B cell (primary cell): ENCODE measurements at regions of chr2 and their contacts with region 1.

Region 1: DNA sequence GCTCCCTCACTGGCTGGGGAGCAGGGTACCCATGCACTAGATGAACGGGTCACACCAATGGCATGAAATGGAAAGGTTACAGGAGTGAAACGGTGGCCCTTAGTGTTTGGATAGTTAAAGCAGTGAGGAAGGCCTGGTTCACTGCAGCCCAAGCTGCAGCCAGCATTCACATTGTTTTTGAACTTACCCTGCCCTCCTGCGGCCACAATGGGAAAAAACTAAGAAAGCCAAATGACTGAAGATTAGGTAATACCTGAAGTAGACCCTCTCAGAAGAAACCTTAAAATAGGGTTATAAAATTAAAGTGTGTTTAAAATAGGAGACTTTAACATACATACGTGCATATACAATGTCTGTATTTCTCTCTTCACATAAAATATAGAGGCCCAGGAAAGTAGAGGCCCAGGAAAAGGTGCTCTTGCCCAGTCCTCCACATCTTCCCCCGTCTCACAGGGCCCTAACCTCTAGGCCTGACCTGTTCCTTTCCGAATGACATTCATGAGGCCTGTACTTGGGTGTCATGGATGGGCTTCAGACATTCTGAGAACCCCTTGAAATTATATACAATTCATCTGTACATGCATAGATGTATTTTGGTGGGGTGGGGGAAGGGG is 33.3 kb downstream of the DOK1 start:
- DNase-seq: peak; percentile 83
- ATAC-seq: peak; percentile 92
- H3K4me3 ChIP-seq: no peak overlapping the region
- H3K4me3 Mint-ChIP-seq: no peak overlapping the region
- H3K27ac ChIP-seq: no peak overlapping the region
- H3K27ac Mint-ChIP-seq: no peak overlapping the region
- H3K4me1 ChIP-seq: peaks cover 0 to 6% of the 10 kb centered on the region in 2 donors
- H3K4me1 Mint-ChIP-seq: peaks cover 9% of the 10 kb centered on the region
- H3K27me3 ChIP-seq: peaks cover 0 to 5% (median 5%) of the 10 kb centered on the region in 4 experiments
- H3K27me3 Mint-ChIP-seq: peaks cover 22% of the 10 kb centered on the region
- CTCF ChIP-seq: peak; percentile 80

Region 2: DNA sequence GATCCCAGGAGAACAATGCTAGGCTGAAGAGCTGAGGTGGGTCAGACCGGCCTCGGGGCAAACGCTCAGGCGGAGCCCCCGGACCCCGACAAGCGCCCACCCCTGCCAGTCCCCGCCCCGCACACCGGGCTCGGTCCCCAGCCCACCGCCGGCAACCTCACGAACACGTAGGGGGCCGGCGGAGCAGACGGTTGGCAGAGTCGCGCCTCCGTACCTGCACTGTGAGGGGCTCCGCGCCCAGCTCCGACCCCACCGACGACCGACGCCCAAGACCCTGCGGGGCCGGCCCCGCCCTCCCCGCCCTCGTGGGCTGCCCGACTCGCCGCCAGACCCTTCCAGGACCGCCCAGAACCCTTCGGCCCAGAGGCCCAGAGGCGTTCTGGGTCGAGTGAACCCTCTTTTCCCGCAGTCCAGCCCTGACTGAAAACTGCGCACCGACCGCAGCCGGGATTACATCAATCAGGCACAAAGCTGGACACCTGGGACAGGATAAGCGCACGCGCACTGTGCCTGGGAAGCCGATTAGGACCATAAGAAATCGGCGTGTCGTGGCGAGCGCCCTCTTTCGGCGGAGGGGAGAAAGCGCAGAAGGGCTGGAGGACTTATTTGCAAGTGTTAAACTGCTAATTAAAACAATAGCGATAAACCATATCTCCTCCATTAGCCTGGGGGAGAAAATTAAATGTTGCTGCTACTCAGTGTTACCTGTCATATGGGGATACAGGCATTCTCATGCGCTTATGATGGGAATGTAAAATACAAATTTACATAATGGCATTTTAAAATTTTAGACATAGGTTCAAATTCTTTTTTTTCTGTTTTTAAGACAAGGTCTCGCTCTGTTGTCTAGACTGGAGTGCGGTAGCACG is 196.0 kb before region 1 on chr2:
- CTCF ChIA-PET with region 1: interaction called, 10 read pairs
- POLR2A ChIA-PET with region 1: no interaction called
- intact Hi-C with region 1: loop called (anchors 5 kb)
- DNase-seq: peak; percentile 98
- ATAC-seq: peak; percentile 89
- H3K4me3 ChIP-seq: peak overlapping the region; percentile 71 to 88 (median 80)
- H3K4me3 Mint-ChIP-seq: peak overlapping the region; percentile 99
- H3K27ac ChIP-seq: peak overlapping the region; percentile 94 to 95
- H3K27ac Mint-ChIP-seq: peak overlapping the region; percentile 100
- H3K4me1 ChIP-seq: peaks cover 18 to 24% of the 10 kb centered on the region in 2 donors
- H3K4me1 Mint-ChIP-seq: peaks cover 16% of the 10 kb centered on the region
- H3K27me3 ChIP-seq: peaks cover 0 to 7% (median 0%) of the 10 kb centered on the region in 4 experiments
- H3K27me3 Mint-ChIP-seq: peaks cover 5% of the 10 kb centered on the region
- CTCF ChIP-seq: peak; percentile 98

Region 3: GRCh38 chr2:74507145-74507925 is 80.4 kb before region 1 on chr2 and contains the start of gene PCGF1:
- CTCF ChIA-PET with region 1: interaction called, 111 read pairs
- POLR2A ChIA-PET with region 1: interaction called, 6 read pairs
- intact Hi-C with region 1: loop called (anchors 1 kb)
- DNase-seq: peak; percentile 100
- ATAC-seq: peak; percentile 85
- H3K4me3 ChIP-seq: peak within 1 kb of the TSS; percentile 78 to 97 (median 83)
- H3K4me3 Mint-ChIP-seq: peak within 1 kb of the TSS; percentile 96
- H3K27ac ChIP-seq: peak within 1 kb of the TSS; percentile 91 to 96
- H3K27ac Mint-ChIP-seq: peak within 1 kb of the TSS; percentile 99
- H3K4me1 ChIP-seq: peaks cover 31 to 38% of the 10 kb centered on the region in 2 donors
- H3K4me1 Mint-ChIP-seq: peaks cover 56% of the 10 kb centered on the region
- H3K27me3 ChIP-seq: peaks cover 0 to 56% (median 14%) of the 10 kb centered on the region in 4 experiments
- H3K27me3 Mint-ChIP-seq: peaks cover 41% of the 10 kb centered on the region
- CTCF ChIP-seq: peak; percentile 64
- total RNA-seq, gene PCGF1: 34.3 and 40.1 TPM in 2 replicates

Region 4: DNA sequence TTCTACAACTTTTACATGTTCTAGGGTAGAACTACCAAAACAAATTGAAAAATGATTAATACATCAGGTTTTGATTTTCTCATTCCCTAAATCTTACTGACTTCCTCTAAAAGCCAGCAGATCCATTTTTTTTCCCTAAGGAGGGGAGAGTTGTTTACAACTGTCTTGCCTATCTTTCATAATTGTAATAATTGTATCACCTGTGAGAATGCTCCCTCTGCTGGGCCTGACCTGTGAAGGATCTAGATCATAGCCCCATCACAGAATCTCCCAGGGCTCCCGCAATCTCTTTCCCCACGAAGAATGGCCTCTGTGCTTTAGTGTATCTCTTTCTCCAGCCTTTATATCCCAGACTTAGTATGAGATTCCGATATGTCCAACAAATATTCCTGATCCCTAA is 43.1 kb before region 1 on chr2:
- CTCF ChIA-PET with region 1: interaction called, 22 read pairs
- POLR2A ChIA-PET with region 1: no interaction called
- intact Hi-C with region 1: no loop called
- DNase-seq: no peak
- ATAC-seq: no peak
- H3K4me3 ChIP-seq: no peak overlapping the region
- H3K4me3 Mint-ChIP-seq: no peak overlapping the region
- H3K27ac ChIP-seq: no peak overlapping the region
- H3K27ac Mint-ChIP-seq: no peak overlapping the region
- H3K4me1 ChIP-seq: peaks cover 17 to 21% of the 10 kb centered on the region in 2 donors
- H3K4me1 Mint-ChIP-seq: peaks cover 13% of the 10 kb centered on the region
- H3K27me3 ChIP-seq: peaks cover 0 to 24% (median 16%) of the 10 kb centered on the region in 4 experiments
- H3K27me3 Mint-ChIP-seq: peaks cover 13% of the 10 kb centered on the region
- CTCF ChIP-seq: peak; percentile 21

Region 5: DNA sequence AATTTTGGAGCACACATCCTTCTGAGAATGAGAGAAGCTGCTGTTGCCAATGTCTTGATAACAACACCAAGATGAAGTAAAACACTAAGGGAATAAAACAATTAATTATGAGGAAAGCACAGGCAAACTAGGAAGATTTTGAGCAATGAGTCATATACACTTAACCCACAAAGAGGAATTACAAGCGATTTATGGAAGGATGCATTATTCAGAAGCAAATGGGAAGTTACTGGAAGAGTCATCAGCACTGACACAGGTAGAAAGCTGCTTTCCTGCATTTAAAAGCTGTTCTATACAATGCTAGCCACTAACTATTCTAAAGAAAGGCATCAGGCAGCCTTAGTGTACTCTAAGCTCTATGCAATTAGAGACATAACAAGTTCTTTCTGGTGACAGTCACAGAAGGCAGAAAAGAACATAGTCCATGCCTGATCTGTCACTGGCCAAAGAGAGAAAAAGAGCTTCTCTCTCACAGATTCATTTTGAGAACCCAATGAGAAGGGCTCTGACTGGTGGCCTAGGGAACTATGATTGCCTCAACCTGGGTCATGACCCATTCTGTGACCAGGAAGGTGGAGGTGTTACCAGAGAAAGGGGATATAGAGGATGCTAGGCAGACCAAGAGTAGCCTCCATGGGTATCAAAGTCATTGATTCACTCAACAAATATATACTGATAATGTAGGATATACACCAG is 15.0 kb after region 1 on chr2:
- CTCF ChIA-PET with region 1: interaction called, 14 read pairs
- POLR2A ChIA-PET with region 1: no interaction called
- intact Hi-C with region 1: no loop called
- DNase-seq: no peak
- ATAC-seq: no peak
- H3K4me3 ChIP-seq: no peak overlapping the region
- H3K4me3 Mint-ChIP-seq: no peak overlapping the region
- H3K27ac ChIP-seq: no peak overlapping the region
- H3K27ac Mint-ChIP-seq: no peak overlapping the region
- H3K4me1 ChIP-seq: peaks cover 3 to 5% of the 10 kb centered on the region in 2 donors
- H3K4me1 Mint-ChIP-seq: peaks cover 5% of the 10 kb centered on the region
- H3K27me3 ChIP-seq: peaks cover 0 to 19% (median 6%) of the 10 kb centered on the region in 4 experiments
- H3K27me3 Mint-ChIP-seq: peaks cover 18% of the 10 kb centered on the region
- CTCF ChIP-seq: no peak